Calu3 (cell line): ENCODE measurements at regions of chr3 and their contacts with region 1.

Region 1: GRCh38 chr3:150408221-150409102 is at the start of gene TSC22D2:
- DNase-seq: peak; percentile 100
- H3K4me3 Mint-ChIP-seq: peak within 1 kb of the TSS; percentile 74
- H3K27ac Mint-ChIP-seq: peak within 1 kb of the TSS; percentile 99
- H3K4me1 Mint-ChIP-seq: peaks cover 21% of the 10 kb centered on the region
- H3K27me3 Mint-ChIP-seq: no peaks in the 10 kb centered on the region
- CTCF ChIP-seq: no peak
- total RNA-seq, gene TSC22D2: 40.9 and 49.7 TPM in 2 replicates

Region 2: DNA sequence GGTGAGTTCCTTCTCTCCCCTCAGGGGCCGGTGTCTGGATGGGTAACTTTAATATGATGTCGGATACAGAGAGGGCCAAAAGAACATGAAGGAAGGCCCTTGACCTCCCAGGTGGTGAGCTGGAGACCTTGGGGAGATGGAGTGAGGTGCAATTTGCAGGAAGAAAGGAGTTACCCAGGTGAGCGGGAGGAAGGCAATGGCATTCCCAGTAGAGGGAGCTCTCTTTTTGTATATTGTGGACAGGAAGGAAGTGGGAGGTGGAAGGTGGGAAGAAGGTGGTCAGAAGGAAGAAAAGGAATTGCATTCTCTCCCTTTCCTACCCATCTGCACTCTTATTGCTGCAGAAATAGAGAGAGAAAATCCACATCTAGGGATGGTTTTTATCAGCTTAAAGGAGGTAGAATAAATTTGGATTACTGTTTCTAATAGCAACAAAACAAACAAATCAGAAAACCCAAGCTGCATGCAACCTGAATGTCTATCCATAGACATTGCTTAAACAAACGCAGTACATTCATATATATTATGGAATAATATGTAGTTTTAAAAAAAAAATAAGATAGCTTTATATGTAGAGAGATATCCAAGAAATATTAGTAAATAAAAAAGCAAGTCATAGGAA is 169.4 kb before region 1 on chr3:
- CTCF ChIA-PET with region 1: interaction called, 23 read pairs
- intact Hi-C with region 1: loop called (anchors 2 kb)
- DNase-seq: peak; percentile 72
- H3K4me3 Mint-ChIP-seq: peak overlapping the region; percentile 59
- H3K27ac Mint-ChIP-seq: peak overlapping the region; percentile 45
- H3K4me1 Mint-ChIP-seq: peaks cover 21% of the 10 kb centered on the region
- H3K27me3 Mint-ChIP-seq: no peaks in the 10 kb centered on the region
- CTCF ChIP-seq: peak; percentile 90

Region 3: GRCh38 chr3:150303776-150304175 is 104.7 kb before region 1 on chr3:
- CTCF ChIA-PET with region 1: interaction called, 3 read pairs
- intact Hi-C with region 1: loop called (anchors 5 kb)
- DNase-seq: peak; percentile 57
- H3K4me3 Mint-ChIP-seq: no peak overlapping the region
- H3K27ac Mint-ChIP-seq: no peak overlapping the region
- H3K4me1 Mint-ChIP-seq: peaks cover 31% of the 10 kb centered on the region
- H3K27me3 Mint-ChIP-seq: no peaks in the 10 kb centered on the region
- CTCF ChIP-seq: peak; percentile 50

Region 4: DNA sequence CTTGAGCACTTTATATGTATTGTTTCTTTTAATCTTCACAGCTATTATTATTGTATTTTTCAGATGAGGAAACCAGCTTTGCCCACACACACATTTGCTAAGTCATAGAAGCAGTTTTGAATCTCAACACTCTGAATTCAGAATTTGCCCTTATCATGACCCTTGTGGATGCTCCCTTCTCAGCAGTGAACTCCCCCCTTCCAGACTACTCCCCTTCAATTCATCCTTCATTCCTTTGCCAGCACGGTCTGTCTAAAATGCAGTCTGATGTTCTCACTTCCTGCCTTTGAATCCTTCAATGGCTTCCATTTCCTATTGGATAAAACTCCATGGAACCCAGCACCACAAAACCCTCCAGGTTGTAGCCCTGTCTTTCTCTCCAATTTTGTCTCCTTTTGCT is 52.9 kb before region 1 on chr3:
- CTCF ChIA-PET with region 1: interaction called, 11 read pairs
- intact Hi-C with region 1: no loop called
- DNase-seq: no peak
- H3K4me3 Mint-ChIP-seq: no peak overlapping the region
- H3K27ac Mint-ChIP-seq: no peak overlapping the region
- H3K4me1 Mint-ChIP-seq: no peaks in the 10 kb centered on the region
- H3K27me3 Mint-ChIP-seq: no peaks in the 10 kb centered on the region
- CTCF ChIP-seq: no peak

Region 5: DNA sequence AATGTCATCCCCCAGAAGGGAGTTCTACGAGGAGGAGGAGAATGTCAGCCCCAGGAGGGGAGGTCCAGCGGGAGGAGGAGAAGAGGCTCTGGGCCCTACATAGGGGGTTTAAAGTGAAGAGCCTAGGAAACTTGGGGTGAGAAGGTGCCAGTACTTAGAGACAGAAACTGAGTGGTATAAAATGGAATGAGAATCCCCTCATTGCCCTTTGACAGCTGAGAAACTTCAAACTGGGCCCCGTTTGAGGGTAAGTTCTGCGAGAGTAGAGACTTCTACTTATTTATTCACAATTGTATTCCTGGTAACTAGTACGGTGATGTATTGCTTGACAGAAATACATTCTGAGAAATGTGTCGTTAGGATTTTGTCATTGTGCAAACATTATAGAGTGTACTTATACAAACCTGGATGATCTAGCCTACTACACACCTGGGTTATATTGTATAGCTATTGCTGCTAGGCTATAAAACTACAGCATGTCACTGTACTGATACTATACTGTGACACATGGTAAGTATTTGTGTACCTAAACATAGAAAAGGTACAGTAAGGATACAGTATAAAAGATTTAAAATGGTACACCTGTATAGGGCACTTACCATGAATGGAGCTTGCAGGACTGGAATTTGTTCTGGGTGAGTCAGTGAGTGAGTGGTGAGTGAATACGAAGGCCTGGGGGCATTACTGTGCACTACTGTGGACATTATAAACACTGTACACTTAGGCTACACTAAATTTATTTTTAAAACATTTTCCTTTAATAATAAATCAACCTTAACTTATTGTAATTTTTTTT is 61.7 kb after region 1 on chr3:
- CTCF ChIA-PET with region 1: interaction called, 7 read pairs
- intact Hi-C with region 1: loop called (anchors 2 kb)
- DNase-seq: peak; percentile 67
- H3K4me3 Mint-ChIP-seq: peak overlapping the region; percentile 43
- H3K27ac Mint-ChIP-seq: peak overlapping the region; percentile 81
- H3K4me1 Mint-ChIP-seq: peaks cover 39% of the 10 kb centered on the region
- H3K27me3 Mint-ChIP-seq: no peaks in the 10 kb centered on the region
- CTCF ChIP-seq: no peak